ENCODE measurements at regions of chr9 and their contacts with region 1.

Region 1: GRCh38 chr9:126398403-126399058 is 71.9 kb downstream of the MVB12B start:
- DNase-seq: peak; percentile 78
- ATAC-seq: peak; percentile 51
- H3K4me3 ChIP-seq: no peak overlapping the region
- H3K4me3 Mint-ChIP-seq: peak overlapping the region; percentile 26
- H3K27ac ChIP-seq: no peak overlapping the region
- H3K27ac Mint-ChIP-seq: no peak overlapping the region
- H3K4me1 ChIP-seq: peaks cover 13 to 16% of the 10 kb centered on the region in 2 donors
- H3K4me1 Mint-ChIP-seq: peaks cover 27% of the 10 kb centered on the region
- H3K27me3 ChIP-seq: no peaks in the 10 kb centered on the region
- H3K27me3 Mint-ChIP-seq: no peaks in the 10 kb centered on the region
- CTCF ChIP-seq: peak; percentile 96

Region 2: DNA sequence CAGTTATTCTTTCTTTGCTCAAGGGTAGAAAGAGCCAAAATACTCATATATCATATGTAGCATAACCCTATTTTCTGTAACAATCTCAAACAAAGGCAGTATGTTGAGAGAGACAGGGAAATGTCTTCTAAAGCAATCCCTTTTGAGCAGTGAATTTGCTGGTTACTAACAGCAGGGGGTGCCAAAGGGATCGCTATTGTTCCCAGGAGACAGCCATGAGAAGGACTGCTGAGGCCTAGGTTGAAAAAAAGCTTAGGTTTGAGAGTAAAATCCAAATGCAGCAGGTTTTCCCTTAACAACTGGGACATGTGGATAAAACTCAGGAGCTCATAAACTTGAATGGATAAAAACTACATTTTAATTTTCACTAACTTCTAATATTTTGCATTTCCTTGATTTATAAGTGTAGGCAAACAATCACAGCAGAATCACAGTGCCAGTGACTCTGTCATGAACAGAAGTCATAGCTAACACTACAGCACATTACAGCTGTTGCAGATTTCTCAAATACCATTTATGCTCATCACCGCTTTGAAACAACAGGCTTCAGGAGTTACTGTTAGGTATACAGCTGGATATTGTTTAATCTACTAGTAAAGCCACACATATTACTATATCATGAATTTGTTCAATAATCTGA is 840.0 kb before region 1 on chr9:
- CTCF ChIA-PET with region 1: interaction called, 4 read pairs
- POLR2A ChIA-PET with region 1: no interaction called
- intact Hi-C with region 1: loop called (anchors 1 kb)
- DNase-seq: peak; percentile 80
- ATAC-seq: peak; percentile 81
- H3K4me3 ChIP-seq: no peak overlapping the region
- H3K4me3 Mint-ChIP-seq: no peak overlapping the region
- H3K27ac ChIP-seq: no peak overlapping the region
- H3K27ac Mint-ChIP-seq: peak overlapping the region; percentile 32
- H3K4me1 ChIP-seq: peaks cover 18 to 30% of the 10 kb centered on the region in 2 donors
- H3K4me1 Mint-ChIP-seq: peaks cover 22% of the 10 kb centered on the region
- H3K27me3 ChIP-seq: no peaks in the 10 kb centered on the region
- H3K27me3 Mint-ChIP-seq: no peaks in the 10 kb centered on the region
- CTCF ChIP-seq: peak; percentile 90

Region 3: DNA sequence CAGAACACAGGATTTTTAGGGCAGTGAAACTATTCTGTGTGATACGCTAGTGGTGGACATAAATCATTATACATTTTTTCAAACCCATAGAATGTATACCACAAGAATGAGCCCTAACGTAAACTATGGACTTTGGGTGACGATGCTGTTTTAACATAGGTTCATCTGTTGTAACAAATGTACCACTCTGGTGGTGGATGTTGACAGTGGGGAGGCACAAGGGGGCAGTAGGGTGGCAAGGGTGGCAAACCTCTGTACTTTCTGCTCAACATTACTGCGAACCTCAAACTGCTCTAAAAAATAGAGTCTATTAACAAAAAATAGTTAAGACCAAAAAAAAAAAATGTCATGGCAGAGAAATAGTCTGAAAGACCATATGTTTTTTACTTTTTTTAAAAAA is 81.0 kb before region 1 on chr9:
- CTCF ChIA-PET with region 1: interaction called, 85 read pairs
- POLR2A ChIA-PET with region 1: no interaction called
- intact Hi-C with region 1: loop called (anchors 1 kb)
- DNase-seq: peak; percentile 35
- ATAC-seq: no peak
- H3K4me3 ChIP-seq: no peak overlapping the region
- H3K4me3 Mint-ChIP-seq: no peak overlapping the region
- H3K27ac ChIP-seq: no peak overlapping the region
- H3K27ac Mint-ChIP-seq: no peak overlapping the region
- H3K4me1 ChIP-seq: no peaks in the 10 kb centered on the region
- H3K4me1 Mint-ChIP-seq: peaks cover 2% of the 10 kb centered on the region
- H3K27me3 ChIP-seq: peaks cover 0 to 4% (median 0%) of the 10 kb centered on the region in 4 experiments
- H3K27me3 Mint-ChIP-seq: peaks cover 23% of the 10 kb centered on the region
- CTCF ChIP-seq: peak; percentile 23

Region 4: GRCh38 chr9:126411225-126411947 is 12.9 kb after region 1 on chr9:
- CTCF ChIA-PET with region 1: interaction called, 27 read pairs
- POLR2A ChIA-PET with region 1: no interaction called
- intact Hi-C with region 1: no loop called
- DNase-seq: peak; percentile 71
- ATAC-seq: peak; percentile 91
- H3K4me3 ChIP-seq: peak overlapping the region; percentile 11 to 45 (median 35)
- H3K4me3 Mint-ChIP-seq: peak overlapping the region; percentile 89
- H3K27ac ChIP-seq: peak overlapping the region; percentile 58 to 67
- H3K27ac Mint-ChIP-seq: peak overlapping the region; percentile 80
- H3K4me1 ChIP-seq: peaks cover 30 to 34% of the 10 kb centered on the region in 2 donors
- H3K4me1 Mint-ChIP-seq: peaks cover 38% of the 10 kb centered on the region
- H3K27me3 ChIP-seq: no peaks in the 10 kb centered on the region
- H3K27me3 Mint-ChIP-seq: no peaks in the 10 kb centered on the region
- CTCF ChIP-seq: no peak

Region 5: DNA sequence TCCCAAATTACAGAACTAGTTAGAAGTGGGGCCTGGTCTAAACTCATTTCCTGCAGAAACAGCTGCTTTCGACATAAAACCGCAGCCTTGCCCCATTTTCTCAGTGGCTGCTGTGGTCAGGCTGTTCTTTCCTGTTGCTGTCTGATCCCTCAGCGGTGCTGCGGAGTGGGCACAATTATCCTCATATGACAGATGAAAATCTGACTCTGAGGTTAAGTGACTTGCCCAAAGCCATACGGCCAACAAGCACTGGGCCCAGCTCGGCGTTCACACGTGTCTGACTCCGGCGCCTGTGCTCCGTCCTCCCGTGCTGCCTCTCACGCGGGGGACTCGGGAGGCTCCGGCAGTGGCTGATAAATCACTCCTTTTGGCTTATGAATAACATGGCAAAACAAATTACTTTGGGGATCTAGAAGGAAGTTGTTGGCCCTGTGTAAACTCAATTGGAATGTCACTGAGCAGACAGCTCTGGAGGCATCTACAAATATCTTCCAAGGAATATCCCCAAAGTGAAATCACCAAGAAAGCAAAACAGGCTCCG is 72.6 kb after region 1 on chr9:
- CTCF ChIA-PET with region 1: interaction called, 36 read pairs
- POLR2A ChIA-PET with region 1: interaction called, 3 read pairs
- intact Hi-C with region 1: loop called (anchors 5 kb)
- DNase-seq: peak; percentile 84
- ATAC-seq: peak; percentile 83
- H3K4me3 ChIP-seq: peak overlapping the region in 4 of 5 experiments; percentile 11 to 60 (median 30)
- H3K4me3 Mint-ChIP-seq: peak overlapping the region; percentile 76
- H3K27ac ChIP-seq: peak overlapping the region; percentile 62 to 83
- H3K27ac Mint-ChIP-seq: peak overlapping the region; percentile 90
- H3K4me1 ChIP-seq: peaks cover 46 to 49% of the 10 kb centered on the region in 2 donors
- H3K4me1 Mint-ChIP-seq: peaks cover 56% of the 10 kb centered on the region
- H3K27me3 ChIP-seq: no peaks in the 10 kb centered on the region
- H3K27me3 Mint-ChIP-seq: no peaks in the 10 kb centered on the region
- CTCF ChIP-seq: no peak

Measured in B cell (primary cell).